Tibial artery (tissue), 4 donors: ENCODE measurements at regions of chr14 and their contacts with region 1.

Region 1: GRCh38 chr14:32252030-32252670 is 49.1 kb upstream of the RNU6-8 start:
- DNase-seq: peak in 1 of 2 donors; percentile 51
- H3K4me3 ChIP-seq: no peak overlapping the region
- H3K27ac ChIP-seq: no peak overlapping the region
- H3K4me1 ChIP-seq: peaks cover 0 to 21% (median 4%) of the 10 kb centered on the region in 4 donors
- H3K27me3 ChIP-seq: no peaks in the 10 kb centered on the region
- CTCF ChIP-seq: peak; percentile 73 to 79

Region 2: DNA sequence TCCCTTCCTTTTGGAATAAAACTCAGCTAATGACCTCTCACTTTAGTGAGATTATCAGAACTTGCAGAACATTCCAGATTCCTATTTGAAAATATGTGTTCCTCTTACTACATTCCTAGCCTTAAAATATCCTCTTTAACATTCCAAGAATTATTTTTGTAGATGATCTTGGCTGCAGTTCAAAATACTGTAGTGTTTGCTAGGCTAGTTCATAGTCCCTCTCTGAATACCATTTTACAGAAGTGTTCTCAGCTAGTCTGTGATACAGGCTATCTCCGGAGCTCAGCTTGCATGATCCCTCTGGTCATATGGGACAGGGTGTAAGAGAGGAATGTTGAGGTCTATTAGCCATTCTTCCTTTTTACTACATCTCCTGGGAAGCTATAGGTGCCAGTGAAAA is 746.7 kb before region 1 on chr14:
- intact Hi-C with region 1: loop called (anchors 10 kb)
- DNase-seq: no peak
- H3K4me3 ChIP-seq: no peak overlapping the region
- H3K27ac ChIP-seq: peak overlapping the region; percentile 48 to 51
- H3K4me1 ChIP-seq: peaks cover 0 to 52% (median 21%) of the 10 kb centered on the region in 4 donors
- H3K27me3 ChIP-seq: no peaks in the 10 kb centered on the region
- CTCF ChIP-seq: no peak

Region 3: GRCh38 chr14:31926123-31926522 is 326.0 kb before region 1 on chr14:
- intact Hi-C with region 1: loop called (anchors 5 kb)
- DNase-seq: no peak
- H3K4me3 ChIP-seq: no peak overlapping the region
- H3K27ac ChIP-seq: no peak overlapping the region
- H3K4me1 ChIP-seq: peaks cover 0 to 17% (median 8%) of the 10 kb centered on the region in 4 donors
- H3K27me3 ChIP-seq: no peaks in the 10 kb centered on the region
- CTCF ChIP-seq: peak; percentile 29 to 36

Region 4: DNA sequence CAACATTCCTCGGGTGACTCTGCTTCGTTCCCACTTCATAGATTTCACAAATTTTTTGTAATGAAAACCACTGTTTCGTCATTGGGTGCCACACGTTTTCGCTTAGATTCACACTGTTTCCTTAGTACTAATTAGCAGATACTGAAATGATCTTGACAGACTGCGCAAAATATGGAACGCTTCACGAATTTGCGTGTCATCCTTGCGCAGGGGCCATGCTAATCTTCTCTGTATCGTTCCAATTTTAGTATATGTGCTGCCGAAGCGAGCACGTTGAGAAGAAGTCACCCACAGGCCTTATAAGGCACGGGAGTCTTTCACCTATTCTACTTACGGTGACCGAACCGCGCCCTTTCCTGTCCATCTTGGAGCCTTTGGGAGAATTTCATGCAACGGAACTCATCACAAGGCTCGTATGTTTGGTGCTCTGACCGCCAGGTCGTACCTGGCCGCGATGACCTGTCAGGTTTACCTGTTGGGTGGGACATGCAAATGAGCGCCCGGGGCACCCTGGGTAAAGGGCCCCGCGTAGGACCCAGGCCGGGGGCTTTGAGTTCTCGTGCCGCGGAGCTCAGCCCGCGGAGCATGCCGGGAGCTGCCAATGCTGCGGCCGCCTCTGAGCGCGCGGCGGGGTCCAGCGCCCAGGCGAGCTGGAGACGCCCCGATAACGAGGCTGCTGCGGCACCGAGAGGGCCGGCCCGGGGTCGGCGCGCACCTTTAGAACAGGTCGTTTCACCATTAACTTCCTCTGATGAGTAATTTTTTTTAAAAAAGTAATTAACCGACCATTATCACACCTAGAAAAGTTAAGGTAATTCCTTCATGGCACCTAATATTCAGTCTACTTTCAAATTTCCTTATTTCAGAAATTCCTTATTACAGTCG is 48.9 kb before region 1 on chr14 and contains the start of gene RNU6-8:
- intact Hi-C with region 1: loop called (anchors 5 kb)
- DNase-seq: peak; percentile 69 to 91
- H3K4me3 ChIP-seq: peak within 1 kb of the TSS; percentile 73 to 83
- H3K27ac ChIP-seq: peak within 1 kb of the TSS; percentile 86 to 89
- H3K4me1 ChIP-seq: peaks cover 0 to 18% (median 3%) of the 10 kb centered on the region in 4 donors
- H3K27me3 ChIP-seq: no peaks in the 10 kb centered on the region
- CTCF ChIP-seq: no peak

Region 5: GRCh38 chr14:32509632-32510187 is 257.6 kb after region 1 on chr14:
- intact Hi-C with region 1: loop called (anchors 10 kb)
- DNase-seq: peak; percentile 74 to 89
- H3K4me3 ChIP-seq: peak overlapping the region; percentile 24 to 32
- H3K27ac ChIP-seq: peak overlapping the region; percentile 77 to 79
- H3K4me1 ChIP-seq: peaks cover 0 to 72% (median 24%) of the 10 kb centered on the region in 4 donors
- H3K27me3 ChIP-seq: no peaks in the 10 kb centered on the region
- CTCF ChIP-seq: no peak